H1 (cell line): ENCODE measurements at regions of chr5 and their contacts with region 1.

Region 1: DNA sequence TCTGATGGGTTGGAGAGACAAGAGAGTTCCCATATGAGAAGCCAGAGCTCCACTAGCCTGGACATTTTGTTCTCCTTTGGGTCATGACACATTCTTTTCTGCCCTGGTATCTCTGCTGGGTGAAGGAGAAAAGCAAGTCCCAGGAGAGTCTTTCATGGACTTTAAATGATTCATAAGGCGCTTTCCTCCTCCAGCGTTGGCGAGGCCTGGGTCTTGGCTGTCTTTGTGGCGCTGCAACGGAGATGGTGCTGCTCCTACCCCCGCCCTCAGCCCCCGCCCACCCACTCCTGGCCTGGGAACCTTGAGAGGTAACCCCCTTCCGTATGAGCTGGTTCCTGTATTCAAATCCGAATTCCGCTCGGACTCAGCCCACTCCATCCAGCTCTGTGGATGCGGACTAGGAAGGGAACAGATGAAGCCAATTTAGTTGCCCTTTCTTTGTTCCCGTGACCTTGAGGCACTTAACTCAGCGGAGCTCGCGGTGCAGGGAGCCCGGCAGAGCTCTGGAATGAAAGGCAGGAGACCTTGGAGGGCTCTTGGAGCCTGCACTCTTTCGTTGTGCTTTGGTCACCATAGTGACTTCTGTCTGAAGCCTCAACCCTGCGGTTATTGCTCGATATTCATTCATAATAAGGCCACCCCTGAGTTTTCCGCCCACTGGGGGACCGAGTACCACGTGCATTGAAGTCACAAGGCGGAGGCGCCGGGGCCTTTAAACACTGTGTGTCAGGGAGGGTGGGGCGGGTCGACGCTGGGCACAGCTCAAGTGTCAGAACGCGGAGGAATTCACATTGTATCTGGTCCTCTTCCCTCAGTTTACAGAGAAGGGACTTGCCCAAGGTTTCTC is 14.0 kb upstream of the PWWP2A start:
- DNase-seq: peak; percentile 25 to 78
- H3K4me3 ChIP-seq: peak overlapping the region in 2 of 4 experiments; percentile 26 to 44; a peak in 5 of 8 replicates
- H3K27ac ChIP-seq: peak overlapping the region; percentile 72; the same call in 1 of the 2 replicates
- H3K4me1 ChIP-seq: peaks cover 0 to 12% (median 7%) of the 10 kb centered on the region in 4 experiments; a peak in 5 of 7 replicates
- H3K27me3 ChIP-seq: no peaks in the 10 kb centered on the region
- CTCF ChIP-seq: no peak
- EP300 ChIP-seq: no peak
- POLR2A ChIP-seq: no peak; a peak in 1 of 3 replicates
- RAD21 ChIP-seq: no peak

Region 2: DNA sequence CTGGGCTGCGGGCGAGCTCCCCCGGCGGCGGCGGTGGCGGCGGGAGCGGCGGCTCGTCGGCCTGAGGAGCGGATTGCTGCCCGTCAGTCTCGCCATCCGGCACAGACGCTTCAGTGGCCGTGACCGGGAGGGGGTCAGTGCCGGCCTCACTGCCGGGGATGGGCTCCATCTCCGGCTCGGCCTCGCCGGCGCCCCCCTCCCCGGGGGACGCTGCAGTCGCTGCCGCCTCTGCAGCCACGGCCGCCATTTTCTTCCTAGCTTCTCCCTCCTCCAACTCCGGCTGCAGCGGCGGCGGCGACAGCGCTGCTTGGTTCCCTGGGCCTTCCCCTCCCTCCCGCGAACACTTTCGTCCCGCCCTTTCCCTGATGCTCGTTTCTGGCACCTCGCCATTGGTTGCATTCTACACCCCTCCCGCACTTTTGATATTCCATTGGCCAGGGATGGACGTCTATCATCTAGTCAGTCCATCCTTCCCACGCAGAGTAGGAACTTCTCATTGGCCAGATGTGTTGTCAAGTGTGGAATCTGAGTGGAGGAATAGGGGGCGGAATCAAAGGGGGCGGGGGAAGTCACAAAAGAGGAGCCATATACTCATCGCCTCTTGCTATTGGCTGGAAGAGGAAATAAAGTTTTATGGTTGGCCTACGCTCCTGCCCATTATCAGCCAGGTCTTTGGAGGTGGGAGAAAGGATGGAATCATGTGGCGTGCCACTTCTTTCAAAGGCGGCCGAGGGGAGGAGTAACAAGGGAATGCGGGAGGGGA is 14.0 kb before region 1 on chr5 and contains the start of gene PWWP2A:
- CTCF ChIA-PET with region 1: interaction called, 6 read pairs
- POLR2A ChIA-PET with region 1: interaction called, 14 read pairs
- DNase-seq: peak; percentile 90 to 99
- H3K4me3 ChIP-seq: peak within 1 kb of the TSS; percentile 85 to 97 (median 86)
- H3K27ac ChIP-seq: peak within 1 kb of the TSS; percentile 81
- H3K4me1 ChIP-seq: peaks cover 0 to 5% (median 0%) of the 10 kb centered on the region in 4 experiments; a peak in 2 of 7 replicates
- H3K27me3 ChIP-seq: no peaks in the 10 kb centered on the region
- CTCF ChIP-seq: no peak
- EP300 ChIP-seq: no peak
- POLR2A ChIP-seq: peak; percentile 71 to 84
- RAD21 ChIP-seq: no peak
- total RNA-seq, gene PWWP2A: 60.0 and 63.0 TPM in 2 replicates

Region 3: DNA sequence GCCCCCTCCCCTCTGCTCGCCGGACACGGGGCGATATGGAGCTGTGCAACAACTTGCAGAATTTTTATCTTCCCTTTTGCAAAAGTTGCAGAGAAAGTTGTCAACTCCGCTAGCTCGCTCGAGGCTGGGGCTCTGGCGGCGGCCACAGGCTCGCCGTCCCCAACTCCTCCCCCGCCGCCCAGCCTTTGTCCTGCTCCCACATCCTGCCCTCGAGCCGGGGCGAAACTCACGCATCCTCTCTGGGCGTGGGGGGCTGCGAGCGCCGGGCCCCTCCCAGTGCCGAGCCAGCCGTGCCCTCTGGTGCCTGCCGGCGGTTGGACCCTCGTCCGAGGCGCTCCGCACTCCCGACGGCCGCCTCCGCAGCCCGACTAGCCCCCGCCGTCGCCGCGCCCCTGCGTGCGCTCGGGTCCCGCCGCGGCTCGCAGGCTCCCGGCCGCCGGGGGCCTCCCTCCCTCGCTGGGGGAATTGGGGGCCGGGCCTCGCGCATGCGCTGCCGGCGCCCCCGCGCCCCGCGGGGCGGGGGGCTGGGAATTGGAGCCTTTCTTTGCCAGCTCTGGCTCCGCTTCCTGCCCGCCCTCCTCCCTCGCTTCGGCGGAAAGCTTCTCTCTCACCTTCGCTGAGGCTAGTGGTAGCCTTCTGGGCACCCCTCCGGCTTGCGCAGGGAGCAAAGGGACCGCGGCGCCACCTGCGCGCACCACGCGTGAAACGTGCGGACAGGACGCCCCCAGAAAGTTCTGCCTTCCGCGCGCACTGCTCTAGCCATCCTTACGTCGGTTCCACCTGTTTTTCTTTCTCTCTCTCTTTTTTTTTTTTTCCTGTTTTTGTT is 179.1 kb after region 1 on chr5 and contains the start of gene CCNJL:
- CTCF ChIA-PET with region 1: no interaction called
- POLR2A ChIA-PET with region 1: no interaction called
- DNase-seq: peak in 1 of 2 experiments; percentile 92
- H3K4me3 ChIP-seq: peak within 1 kb of the TSS; percentile 87 to 93 (median 92)
- H3K27ac ChIP-seq: peak within 1 kb of the TSS; percentile 43; the same call in 1 of the 2 replicates
- H3K4me1 ChIP-seq: peaks cover 4 to 7% (median 6%) of the 10 kb centered on the region in 4 experiments; a peak in 5 of 7 replicates
- H3K27me3 ChIP-seq: no peaks in the 10 kb centered on the region
- CTCF ChIP-seq: no peak
- EP300 ChIP-seq: no peak
- POLR2A ChIP-seq: peak in 1 of 2 experiments; percentile 61; a peak in 2 of 3 replicates
- RAD21 ChIP-seq: no peak; a peak in 1 of 4 replicates
- total RNA-seq, gene CCNJL: 34.6 and 36.2 TPM in 2 replicates